CD4-positive, alpha-beta T cell (primary cell): ENCODE measurements at regions of chrX and their contacts with region 1.

Region 1: GRCh38 chrX:120250522-120251271 is at the start of gene ZBTB33:
- DNase-seq: peak; percentile 67 to 94 (median 80)
- ATAC-seq: peak; percentile 99
- H3K4me3 ChIP-seq: peak within 1 kb of the TSS; percentile 76
- H3K4me3 Mint-ChIP-seq: peak within 1 kb of the TSS; percentile 96
- H3K27ac ChIP-seq: peak within 1 kb of the TSS; percentile 72 to 89
- H3K27ac Mint-ChIP-seq: peak within 1 kb of the TSS; percentile 94
- H3K4me1 ChIP-seq: no peaks in the 10 kb centered on the region
- H3K4me1 Mint-ChIP-seq: peaks cover 41% of the 10 kb centered on the region
- H3K27me3 ChIP-seq: no peaks in the 10 kb centered on the region
- H3K27me3 Mint-ChIP-seq: no peaks in the 10 kb centered on the region
- CTCF ChIP-seq: peak; percentile 79
- total RNA-seq, gene ZBTB33: 31.6 to 32.7 TPM

Region 2: DNA sequence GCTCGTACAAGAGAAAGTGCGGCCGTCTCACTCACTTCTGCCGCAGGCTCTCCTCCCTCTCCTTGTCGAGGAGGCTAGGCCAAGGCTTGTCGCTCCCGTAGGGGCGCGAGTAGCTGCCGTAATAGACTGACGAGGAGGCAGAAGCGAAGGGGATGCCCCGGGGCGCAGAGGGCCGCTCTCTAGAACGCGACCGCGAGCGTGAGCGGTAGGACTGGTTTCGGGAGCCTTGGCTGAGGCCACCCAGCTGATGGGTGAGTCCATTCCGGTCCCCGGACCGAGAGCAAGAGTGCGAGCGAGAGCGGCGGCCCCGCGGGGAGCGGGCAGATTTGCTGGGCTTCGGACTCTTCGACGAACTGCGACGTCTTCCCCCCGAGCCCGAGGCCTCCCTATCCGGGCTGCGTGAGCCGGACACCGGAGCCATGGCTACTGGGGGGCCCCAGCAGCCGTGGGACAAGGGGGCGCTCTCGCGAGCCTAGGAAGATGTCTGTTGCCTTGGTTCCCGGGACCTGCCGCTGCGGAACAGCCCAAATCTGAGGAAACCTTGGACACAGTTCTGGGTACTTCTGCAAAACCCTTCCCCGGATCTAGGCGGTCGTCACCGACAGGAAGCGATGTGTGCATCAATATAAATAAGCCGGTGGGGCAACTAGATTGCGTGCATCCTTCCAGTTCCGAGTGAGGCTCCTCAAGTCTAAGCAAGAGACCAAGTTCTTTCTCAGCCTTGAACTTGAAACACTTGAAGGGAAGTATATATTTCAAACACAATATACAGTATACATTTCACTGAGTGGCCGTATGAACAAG is 307.3 kb before region 1 on chrX and contains the start of gene NKAP:
- CTCF ChIA-PET with region 1: no interaction called
- POLR2A ChIA-PET with region 1: interaction called, 5 read pairs
- intact Hi-C with region 1: loop called (anchors 10 kb)
- DNase-seq: peak; percentile 64 to 91 (median 72)
- ATAC-seq: peak; percentile 84
- H3K4me3 ChIP-seq: peak within 1 kb of the TSS; percentile 95
- H3K4me3 Mint-ChIP-seq: peak within 1 kb of the TSS; percentile 96
- H3K27ac ChIP-seq: peak within 1 kb of the TSS; percentile 91 to 93
- H3K27ac Mint-ChIP-seq: peak within 1 kb of the TSS; percentile 87
- H3K4me1 ChIP-seq: peaks cover 19% of the 10 kb centered on the region
- H3K4me1 Mint-ChIP-seq: peaks cover 27% of the 10 kb centered on the region
- H3K27me3 ChIP-seq: no peaks in the 10 kb centered on the region
- H3K27me3 Mint-ChIP-seq: peaks cover 2% of the 10 kb centered on the region
- CTCF ChIP-seq: no peak
- total RNA-seq, gene NKAP: 14.5 to 15.6 TPM

Region 3: DNA sequence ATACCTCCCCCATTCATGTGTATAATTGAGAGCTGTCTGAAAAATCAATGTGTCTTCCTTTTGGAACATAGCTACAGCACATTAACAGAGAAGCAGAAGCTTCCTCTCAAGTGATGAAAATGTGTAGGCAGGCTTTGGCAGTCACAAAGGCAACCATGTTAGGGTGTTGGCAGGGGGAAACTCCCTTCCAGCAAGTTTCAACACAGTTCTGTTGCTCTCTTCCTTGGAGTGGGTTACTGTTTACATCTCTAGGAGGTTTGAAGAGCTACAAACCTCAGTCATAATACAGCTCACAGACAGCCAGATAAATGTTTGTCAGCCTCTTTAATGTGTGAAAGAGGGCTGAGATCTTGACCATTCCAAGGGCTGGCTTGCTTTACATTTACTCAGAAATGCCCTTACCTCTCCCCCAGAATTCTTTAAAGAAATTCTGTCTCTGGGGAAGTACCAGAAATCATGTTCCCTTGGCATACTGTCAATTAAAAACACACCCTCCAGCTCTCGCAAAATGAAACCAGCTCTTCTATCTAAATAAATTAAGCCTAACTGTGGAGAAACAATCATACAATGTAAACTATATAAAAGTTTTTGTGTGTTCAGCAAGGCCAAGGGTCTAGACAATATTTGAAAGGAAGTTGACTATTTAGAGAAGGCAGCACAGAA is 18.8 kb after region 1 on chrX:
- CTCF ChIA-PET with region 1: interaction called, 7 read pairs
- POLR2A ChIA-PET with region 1: interaction called, 10 read pairs
- intact Hi-C with region 1: no loop called
- DNase-seq: peak in 4 of 14 experiments; percentile 1 to 63 (median 51)
- ATAC-seq: peak; percentile 97
- H3K4me3 ChIP-seq: no peak overlapping the region
- H3K4me3 Mint-ChIP-seq: no peak overlapping the region
- H3K27ac ChIP-seq: peak overlapping the region; percentile 25 to 45
- H3K27ac Mint-ChIP-seq: peak overlapping the region; percentile 80
- H3K4me1 ChIP-seq: peaks cover 7% of the 10 kb centered on the region
- H3K4me1 Mint-ChIP-seq: peaks cover 11% of the 10 kb centered on the region
- H3K27me3 ChIP-seq: no peaks in the 10 kb centered on the region
- H3K27me3 Mint-ChIP-seq: no peaks in the 10 kb centered on the region
- CTCF ChIP-seq: no peak

Region 4: GRCh38 chrX:120302434-120302833 is 51.7 kb after region 1 on chrX:
- CTCF ChIA-PET with region 1: interaction called, 4 read pairs
- POLR2A ChIA-PET with region 1: interaction called, 10 read pairs
- intact Hi-C with region 1: loop called (anchors 5 kb)
- DNase-seq: peak in 12 of 14 experiments; percentile 17 to 86 (median 34)
- ATAC-seq: peak; percentile 95
- H3K4me3 ChIP-seq: peak overlapping the region; percentile 10
- H3K4me3 Mint-ChIP-seq: no peak overlapping the region
- H3K27ac ChIP-seq: no peak overlapping the region
- H3K27ac Mint-ChIP-seq: no peak overlapping the region
- H3K4me1 ChIP-seq: peaks cover 13% of the 10 kb centered on the region
- H3K4me1 Mint-ChIP-seq: peaks cover 22% of the 10 kb centered on the region
- H3K27me3 ChIP-seq: no peaks in the 10 kb centered on the region
- H3K27me3 Mint-ChIP-seq: peaks cover 6% of the 10 kb centered on the region
- CTCF ChIP-seq: no peak

Region 5: GRCh38 chrX:120308959-120309872 is 58.5 kb after region 1 on chrX:
- CTCF ChIA-PET with region 1: interaction called, 15 read pairs
- POLR2A ChIA-PET with region 1: interaction called, 42 read pairs
- intact Hi-C with region 1: loop called (anchors 5 kb)
- DNase-seq: peak; percentile 45 to 89 (median 65)
- ATAC-seq: peak; percentile 95
- H3K4me3 ChIP-seq: peak overlapping the region; percentile 64
- H3K4me3 Mint-ChIP-seq: peak overlapping the region; percentile 85
- H3K27ac ChIP-seq: no peak overlapping the region
- H3K27ac Mint-ChIP-seq: peak overlapping the region; percentile 72
- H3K4me1 ChIP-seq: peaks cover 29% of the 10 kb centered on the region
- H3K4me1 Mint-ChIP-seq: peaks cover 25% of the 10 kb centered on the region
- H3K27me3 ChIP-seq: peaks cover 10 to 24% of the 10 kb centered on the region in 2 experiments
- H3K27me3 Mint-ChIP-seq: peaks cover 49% of the 10 kb centered on the region
- CTCF ChIP-seq: peak; percentile 51

Region 6: DNA sequence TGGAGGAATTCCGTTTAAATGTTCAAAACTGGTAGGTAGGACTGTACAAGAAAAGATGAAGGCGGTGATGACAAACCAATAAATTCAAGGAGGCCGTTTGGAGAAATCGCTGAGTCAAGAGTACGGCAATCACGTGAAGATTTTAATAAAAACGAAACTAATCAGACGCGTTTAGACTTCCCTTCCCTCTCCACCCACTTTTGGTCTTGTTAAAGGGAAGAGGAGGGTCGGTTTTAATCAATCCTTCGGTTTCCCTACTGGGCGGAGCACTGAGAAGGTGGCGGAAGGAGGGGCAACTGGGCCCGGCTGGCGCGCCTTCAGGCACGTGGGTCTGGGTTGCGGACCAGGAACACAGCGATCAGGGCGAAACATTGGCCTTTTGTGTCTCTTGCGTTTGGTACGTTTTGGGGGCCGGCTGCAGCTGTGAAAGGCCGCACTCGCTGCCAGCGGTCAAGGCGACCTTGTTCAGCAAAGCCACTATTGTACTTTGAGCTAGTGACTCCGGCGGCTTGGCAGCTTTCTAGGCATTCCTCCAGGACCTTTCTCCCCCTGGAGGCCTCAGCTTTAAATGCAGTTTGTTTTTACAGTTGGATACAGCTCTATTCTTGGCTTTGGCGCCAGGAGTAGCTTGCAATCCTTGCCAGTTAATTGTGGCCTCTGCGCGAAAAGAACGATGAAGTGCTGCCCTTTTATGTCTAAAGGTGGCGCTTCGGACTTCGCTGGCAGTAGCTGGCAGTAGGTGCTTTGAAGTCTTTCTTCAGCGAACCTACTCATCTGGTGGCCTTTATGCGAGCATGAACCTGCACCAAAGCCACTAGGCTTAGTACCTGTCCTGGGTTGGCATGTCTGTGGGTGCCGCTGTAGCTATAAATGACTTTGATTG is 235.2 kb after region 1 on chrX:
- CTCF ChIA-PET with region 1: interaction called, 3 read pairs
- POLR2A ChIA-PET with region 1: interaction called, 10 read pairs
- intact Hi-C with region 1: no loop called
- DNase-seq: peak; percentile 12 to 80 (median 28)
- ATAC-seq: peak; percentile 81
- H3K4me3 ChIP-seq: peak overlapping the region; percentile 76
- H3K4me3 Mint-ChIP-seq: peak overlapping the region; percentile 98
- H3K27ac ChIP-seq: peak overlapping the region; percentile 41 to 74
- H3K27ac Mint-ChIP-seq: peak overlapping the region; percentile 97
- H3K4me1 ChIP-seq: peaks cover 19% of the 10 kb centered on the region
- H3K4me1 Mint-ChIP-seq: peaks cover 26% of the 10 kb centered on the region
- H3K27me3 ChIP-seq: no peaks in the 10 kb centered on the region
- H3K27me3 Mint-ChIP-seq: no peaks in the 10 kb centered on the region
- CTCF ChIP-seq: peak; percentile 52

Region 7: GRCh38 chrX:120560842-120561633 is 310.3 kb after region 1 on chrX and contains the start of gene CUL4B:
- CTCF ChIA-PET with region 1: no interaction called
- POLR2A ChIA-PET with region 1: interaction called, 11 read pairs
- intact Hi-C with region 1: no loop called
- DNase-seq: peak; percentile 81 to 96 (median 88)
- ATAC-seq: peak; percentile 85
- H3K4me3 ChIP-seq: peak within 1 kb of the TSS; percentile 84
- H3K4me3 Mint-ChIP-seq: peak within 1 kb of the TSS; percentile 97
- H3K27ac ChIP-seq: peak within 1 kb of the TSS; percentile 95 to 97
- H3K27ac Mint-ChIP-seq: peak within 1 kb of the TSS; percentile 90
- H3K4me1 ChIP-seq: peaks cover 9% of the 10 kb centered on the region
- H3K4me1 Mint-ChIP-seq: peaks cover 32% of the 10 kb centered on the region
- H3K27me3 ChIP-seq: no peaks in the 10 kb centered on the region
- H3K27me3 Mint-ChIP-seq: no peaks in the 10 kb centered on the region
- CTCF ChIP-seq: no peak
- total RNA-seq, gene CUL4B: 32.1 to 34.1 TPM